Activated B cell treated with CpG ODN at 0.5 μM for 24 hours (primary cell): ENCODE measurements at regions of chr19 and their contacts with region 1.

Region 1: DNA sequence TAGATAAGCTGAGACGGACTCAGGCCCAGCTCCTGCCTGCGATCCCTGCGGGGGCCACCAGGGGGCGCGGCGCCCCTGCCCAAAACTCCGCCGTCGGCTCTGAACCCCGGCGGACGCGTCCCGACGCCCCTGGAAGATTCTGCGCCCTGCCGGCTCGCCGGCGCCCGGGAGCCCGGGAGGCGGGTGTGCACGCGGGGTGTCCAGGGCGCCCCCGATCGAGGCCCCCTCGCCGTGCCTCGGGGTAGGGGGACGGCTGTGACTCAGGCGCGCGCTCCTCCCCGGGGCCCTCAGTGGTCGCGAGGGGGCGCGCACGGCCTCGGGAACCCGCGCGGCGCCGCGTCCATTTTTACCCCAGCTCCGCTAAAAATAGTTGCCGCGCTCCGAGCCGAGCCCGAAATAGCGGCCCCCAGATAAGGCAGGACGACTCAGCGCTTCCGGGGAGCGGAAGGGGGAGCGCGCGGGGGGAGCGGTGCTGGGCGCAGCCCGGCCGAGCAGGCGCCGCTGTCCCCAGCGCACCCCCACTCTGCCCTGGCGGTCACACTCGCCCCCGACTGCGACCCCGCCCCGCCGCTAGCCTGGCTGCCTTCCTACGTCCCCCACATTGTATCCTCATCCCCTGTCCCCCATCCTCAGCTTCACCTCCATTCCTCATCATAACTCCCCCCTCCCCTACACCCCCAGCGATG is 16.0 kb upstream of the ERCC1 start:
- DNase-seq: peak; percentile 94
- ATAC-seq: peak; percentile 40
- H3K4me3 Mint-ChIP-seq: peak overlapping the region; percentile 72
- H3K27ac Mint-ChIP-seq: peak overlapping the region; percentile 75
- H3K4me1 Mint-ChIP-seq: peaks cover 37% of the 10 kb centered on the region
- H3K27me3 Mint-ChIP-seq: no peaks in the 10 kb centered on the region
- CTCF ChIP-seq: peak; percentile 98

Region 2: DNA sequence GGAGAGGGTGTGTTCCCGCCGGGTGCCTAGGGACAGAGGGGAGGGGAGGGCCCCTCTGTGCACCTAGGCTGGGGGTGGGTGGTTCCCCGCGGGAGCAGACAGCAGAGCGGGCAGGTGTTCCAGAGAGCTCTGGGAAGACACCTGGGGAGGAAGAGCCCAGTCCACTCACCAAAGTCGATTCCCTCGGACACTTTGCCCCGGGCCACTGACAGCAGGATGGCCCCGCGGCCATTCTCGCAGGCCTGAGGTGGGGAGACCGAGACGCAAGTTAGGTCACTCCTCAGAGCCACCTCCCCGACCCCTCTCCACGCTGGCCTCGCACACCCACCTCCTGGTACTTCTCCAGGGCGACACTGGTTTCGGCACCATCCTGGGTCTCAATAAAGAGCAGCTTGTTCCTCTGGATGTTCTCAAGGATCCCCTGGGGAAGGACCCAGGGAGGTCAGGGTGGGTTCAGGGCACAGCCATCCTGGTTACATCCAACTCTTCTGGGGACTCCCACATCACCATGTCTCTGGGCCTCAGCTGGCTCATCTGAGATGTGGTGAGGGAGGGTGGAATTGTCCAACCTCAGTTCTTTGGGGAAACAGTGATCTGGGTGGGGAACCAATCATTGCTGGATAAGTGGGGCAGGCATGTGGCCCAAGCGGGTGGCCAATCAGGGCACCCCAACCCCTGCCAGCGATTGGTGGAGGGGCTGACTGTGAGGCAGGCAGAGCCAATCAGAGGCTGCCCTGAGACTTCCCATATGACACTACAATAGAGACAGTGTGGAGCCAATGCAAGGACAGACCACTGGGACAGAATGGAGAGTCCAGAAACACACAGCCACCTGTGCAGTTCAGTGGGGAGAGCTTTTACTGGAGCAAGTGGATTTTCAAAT is 86.6 kb before region 1 on chr19:
- CTCF ChIA-PET with region 1: no interaction called
- POLR2A ChIA-PET with region 1: no interaction called
- intact Hi-C with region 1: no loop called
- DNase-seq: no peak
- ATAC-seq: no peak
- H3K4me3 Mint-ChIP-seq: no peak overlapping the region
- H3K27ac Mint-ChIP-seq: no peak overlapping the region
- H3K4me1 Mint-ChIP-seq: no peaks in the 10 kb centered on the region
- H3K27me3 Mint-ChIP-seq: no peaks in the 10 kb centered on the region
- CTCF ChIP-seq: no peak

Region 3: GRCh38 chr19:45450012-45450333 is 10.3 kb after region 1 on chr19:
- CTCF ChIA-PET with region 1: interaction called, 15 read pairs
- POLR2A ChIA-PET with region 1: interaction called, 8 read pairs
- intact Hi-C with region 1: loop called (anchors 1 kb)
- DNase-seq: no peak
- ATAC-seq: peak; percentile 11
- H3K4me3 Mint-ChIP-seq: peak overlapping the region; percentile 92
- H3K27ac Mint-ChIP-seq: peak overlapping the region; percentile 97
- H3K4me1 Mint-ChIP-seq: peaks cover 52% of the 10 kb centered on the region
- H3K27me3 Mint-ChIP-seq: no peaks in the 10 kb centered on the region
- CTCF ChIP-seq: no peak

Region 4: DNA sequence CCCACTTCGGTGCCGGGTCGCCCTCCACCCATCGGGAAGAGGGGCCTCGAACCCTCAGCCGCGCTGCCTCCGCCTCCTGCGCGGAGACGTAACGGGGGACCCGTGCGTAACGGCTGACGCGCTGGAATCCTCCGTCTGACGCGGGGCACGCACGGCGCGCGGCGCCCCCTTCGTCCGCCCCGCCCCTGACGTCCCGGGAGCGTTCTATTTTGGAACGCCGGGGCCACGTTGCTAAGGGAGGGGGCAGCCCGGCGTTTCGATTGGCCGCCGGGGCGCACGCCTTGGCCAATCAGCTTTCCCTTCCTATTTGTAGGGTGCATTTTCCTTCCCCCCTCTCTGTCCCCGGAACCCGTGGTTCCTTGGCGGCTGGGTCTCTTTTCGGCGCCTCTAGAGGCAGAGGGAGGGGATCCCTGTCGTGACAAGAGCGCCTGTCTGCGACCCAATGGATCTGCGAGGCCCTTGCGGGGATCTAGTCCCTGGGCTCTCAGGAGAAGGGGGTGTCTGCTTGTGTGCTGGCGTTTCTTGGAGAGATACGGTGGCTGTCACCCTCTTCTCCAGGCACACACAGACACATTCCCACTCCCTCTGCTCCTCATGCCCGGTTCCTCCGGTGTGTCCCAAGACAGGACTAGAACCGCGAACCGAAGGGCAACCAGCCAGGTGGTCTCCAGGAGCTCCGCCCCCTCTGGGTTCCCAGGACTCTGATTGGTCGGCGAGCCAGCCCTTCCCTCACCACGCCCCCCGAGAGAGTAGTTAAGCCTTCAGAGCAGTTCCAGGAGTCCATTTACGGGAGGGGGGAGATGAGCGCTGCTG is 29.6 kb after region 1 on chr19:
- CTCF ChIA-PET with region 1: interaction called, 49 read pairs
- POLR2A ChIA-PET with region 1: interaction called, 43 read pairs
- intact Hi-C with region 1: loop called (anchors 1 kb)
- DNase-seq: peak; percentile 92
- ATAC-seq: peak; percentile 52
- H3K4me3 Mint-ChIP-seq: peak overlapping the region; percentile 92
- H3K27ac Mint-ChIP-seq: peak overlapping the region; percentile 98
- H3K4me1 Mint-ChIP-seq: peaks cover 57% of the 10 kb centered on the region
- H3K27me3 Mint-ChIP-seq: peaks cover 16% of the 10 kb centered on the region
- CTCF ChIP-seq: no peak

Region 5: DNA sequence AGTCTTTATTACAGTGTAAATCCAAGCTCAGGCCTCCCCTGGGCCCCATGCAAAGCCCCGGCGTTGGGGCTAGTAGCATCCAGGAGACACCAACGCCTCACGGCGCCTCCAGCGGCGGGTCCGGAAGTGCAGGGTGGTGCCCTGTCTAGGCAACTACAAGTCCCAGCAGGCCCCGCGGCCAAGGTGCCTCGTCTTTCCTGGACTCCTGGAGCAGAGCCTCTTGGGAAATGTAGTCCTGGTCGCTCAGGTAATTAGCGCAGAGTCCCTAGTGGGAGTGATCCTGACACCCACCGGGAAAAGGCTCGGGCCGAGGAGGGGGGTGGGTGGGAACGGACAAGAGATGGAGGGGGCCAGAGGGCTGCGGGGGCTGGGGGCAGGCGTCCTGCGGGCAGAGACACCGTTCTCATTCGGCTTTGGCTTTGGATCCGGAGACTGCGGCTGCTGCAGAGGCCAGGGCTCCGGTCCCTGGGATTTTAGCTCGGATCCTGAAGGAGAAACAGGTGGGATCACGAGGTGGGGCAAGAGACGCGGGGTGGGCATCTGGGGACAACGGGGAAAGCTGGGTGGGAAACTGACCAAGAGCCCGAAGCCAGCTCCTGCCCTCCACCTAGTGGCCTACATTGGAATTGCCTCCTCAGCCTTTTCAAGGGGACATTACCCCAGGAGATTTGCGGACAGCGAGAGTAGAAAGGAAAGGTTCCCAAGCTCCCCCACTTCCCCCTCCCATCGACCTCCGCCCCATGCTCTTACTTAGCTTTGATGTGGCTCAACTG is 45.8 kb after region 1 on chr19:
- CTCF ChIA-PET with region 1: interaction called, 336 read pairs
- POLR2A ChIA-PET with region 1: interaction called, 92 read pairs
- intact Hi-C with region 1: loop called (anchors 1 kb)
- DNase-seq: peak; percentile 96
- ATAC-seq: peak; percentile 99
- H3K4me3 Mint-ChIP-seq: peak overlapping the region; percentile 91
- H3K27ac Mint-ChIP-seq: peak overlapping the region; percentile 74
- H3K4me1 Mint-ChIP-seq: peaks cover 8% of the 10 kb centered on the region
- H3K27me3 Mint-ChIP-seq: peaks cover 3% of the 10 kb centered on the region
- CTCF ChIP-seq: peak; percentile 84

Region 6: GRCh38 chr19:45584332-45585157 is 144.8 kb after region 1 on chr19 and contains the start of gene OPA3:
- CTCF ChIA-PET with region 1: no interaction called
- POLR2A ChIA-PET with region 1: no interaction called
- intact Hi-C with region 1: no loop called
- DNase-seq: peak; percentile 94
- ATAC-seq: peak; percentile 89
- H3K4me3 Mint-ChIP-seq: peak within 1 kb of the TSS; percentile 96
- H3K27ac Mint-ChIP-seq: peak within 1 kb of the TSS; percentile 98
- H3K4me1 Mint-ChIP-seq: peaks cover 13% of the 10 kb centered on the region
- H3K27me3 Mint-ChIP-seq: peaks cover 5% of the 10 kb centered on the region
- CTCF ChIP-seq: no peak
- total RNA-seq, gene OPA3: 12.0 and 14.4 TPM in 2 replicates